Activated B cell treated with CpG ODN at 0.5 μM for 24 hours (primary cell): ENCODE measurements at regions of chr1 and their contacts with region 1.

Region 1: GRCh38 chr1:235954306-235955283 is 87.9 kb upstream of the LYST start:
- DNase-seq: peak; percentile 70
- ATAC-seq: peak; percentile 95
- H3K4me3 Mint-ChIP-seq: peak overlapping the region; percentile 58
- H3K27ac Mint-ChIP-seq: peak overlapping the region; percentile 81
- H3K4me1 Mint-ChIP-seq: peaks cover 69% of the 10 kb centered on the region
- H3K27me3 Mint-ChIP-seq: no peaks in the 10 kb centered on the region
- CTCF ChIP-seq: no peak

Region 2: DNA sequence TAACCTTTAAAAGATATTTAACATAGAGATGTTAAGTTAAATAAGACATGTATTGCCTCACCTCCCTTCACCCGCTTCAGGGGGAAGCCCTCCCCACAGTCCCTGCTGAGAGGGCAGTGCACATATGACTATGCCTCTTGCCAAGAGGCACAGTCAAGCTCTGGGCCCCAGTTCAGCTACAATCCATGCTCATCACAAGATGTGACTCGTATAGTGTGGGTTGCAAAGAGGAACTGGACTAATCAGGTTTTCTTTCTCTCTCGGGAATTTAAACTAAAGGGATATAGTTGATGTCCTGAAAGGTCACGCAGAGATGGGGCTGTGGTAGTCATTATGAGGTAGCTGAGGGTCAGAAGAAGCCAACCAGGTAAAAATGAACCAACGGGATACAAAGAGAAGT is 123.4 kb before region 1 on chr1:
- CTCF ChIA-PET with region 1: no interaction called
- POLR2A ChIA-PET with region 1: interaction called, 3 read pairs
- intact Hi-C with region 1: loop called (anchors 1 kb)
- DNase-seq: no peak
- ATAC-seq: peak; percentile 100
- H3K4me3 Mint-ChIP-seq: peak overlapping the region; percentile 13
- H3K27ac Mint-ChIP-seq: peak overlapping the region; percentile 84
- H3K4me1 Mint-ChIP-seq: peaks cover 20% of the 10 kb centered on the region
- H3K27me3 Mint-ChIP-seq: no peaks in the 10 kb centered on the region
- CTCF ChIP-seq: no peak

Region 3: GRCh38 chr1:235892734-235893413 is 61.7 kb before region 1 on chr1:
- CTCF ChIA-PET with region 1: no interaction called
- POLR2A ChIA-PET with region 1: interaction called, 7 read pairs
- intact Hi-C with region 1: loop called (anchors 2 kb)
- DNase-seq: no peak
- ATAC-seq: peak; percentile 69
- H3K4me3 Mint-ChIP-seq: no peak overlapping the region
- H3K27ac Mint-ChIP-seq: no peak overlapping the region
- H3K4me1 Mint-ChIP-seq: peaks cover 34% of the 10 kb centered on the region
- H3K27me3 Mint-ChIP-seq: no peaks in the 10 kb centered on the region
- CTCF ChIP-seq: no peak

Region 4: GRCh38 chr1:235933017-235933765 is 21.4 kb before region 1 on chr1:
- CTCF ChIA-PET with region 1: interaction called, 13 read pairs
- POLR2A ChIA-PET with region 1: interaction called, 29 read pairs
- intact Hi-C with region 1: loop called (anchors 1 kb)
- DNase-seq: no peak
- ATAC-seq: no peak
- H3K4me3 Mint-ChIP-seq: peak overlapping the region; percentile 62
- H3K27ac Mint-ChIP-seq: peak overlapping the region; percentile 72
- H3K4me1 Mint-ChIP-seq: peaks cover 91% of the 10 kb centered on the region
- H3K27me3 Mint-ChIP-seq: no peaks in the 10 kb centered on the region
- CTCF ChIP-seq: no peak

Region 5: DNA sequence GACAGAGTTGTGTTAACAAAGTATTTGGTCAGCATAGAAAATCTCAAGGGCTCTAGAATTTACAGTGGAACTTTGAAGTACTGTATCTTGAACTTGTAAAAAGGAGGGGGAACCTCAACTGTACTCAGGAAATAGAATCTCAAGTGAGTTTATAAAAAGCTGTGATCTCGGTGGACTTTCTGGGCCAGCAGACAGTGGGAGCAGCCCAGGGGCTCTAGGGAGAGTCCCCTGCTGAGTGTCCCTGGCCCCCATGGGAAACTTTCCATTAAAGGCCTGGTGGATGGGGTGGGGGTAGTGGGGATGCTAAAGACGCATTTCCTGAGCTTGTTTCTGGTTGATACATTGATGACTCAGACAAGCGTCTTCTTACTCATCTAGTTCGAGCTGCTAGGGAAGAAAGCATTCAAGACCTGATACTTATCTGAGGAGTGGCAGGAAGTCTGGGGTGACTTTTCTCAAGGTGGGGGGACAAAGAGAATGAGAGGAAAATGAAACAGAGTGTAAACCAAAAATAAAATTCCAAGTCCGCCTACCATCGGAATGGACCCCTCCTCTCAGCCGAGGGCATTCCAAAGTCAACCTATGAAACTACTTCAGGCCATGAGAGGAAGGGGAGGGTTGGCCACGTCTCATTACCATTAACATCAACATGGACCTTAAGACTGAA is 44.8 kb after region 1 on chr1:
- CTCF ChIA-PET with region 1: no interaction called
- POLR2A ChIA-PET with region 1: interaction called, 7 read pairs
- intact Hi-C with region 1: loop called (anchors 1 kb)
- DNase-seq: no peak
- ATAC-seq: peak; percentile 89
- H3K4me3 Mint-ChIP-seq: peak overlapping the region; percentile 58
- H3K27ac Mint-ChIP-seq: peak overlapping the region; percentile 89
- H3K4me1 Mint-ChIP-seq: peaks cover 15% of the 10 kb centered on the region
- H3K27me3 Mint-ChIP-seq: peaks cover 3% of the 10 kb centered on the region
- CTCF ChIP-seq: no peak

Region 6: GRCh38 chr1:236064674-236065508 is 110.3 kb after region 1 on chr1 and contains the start of gene NID1:
- CTCF ChIA-PET with region 1: no interaction called
- POLR2A ChIA-PET with region 1: no interaction called
- intact Hi-C with region 1: no loop called
- DNase-seq: peak; percentile 38
- ATAC-seq: peak; percentile 18
- H3K4me3 Mint-ChIP-seq: peak within 1 kb of the TSS; percentile 70
- H3K27ac Mint-ChIP-seq: no peak within 1 kb of the TSS
- H3K4me1 Mint-ChIP-seq: peaks cover 33% of the 10 kb centered on the region
- H3K27me3 Mint-ChIP-seq: peaks cover 25% of the 10 kb centered on the region
- CTCF ChIP-seq: no peak
- total RNA-seq, gene NID1: 0.04 and 0.10 TPM in 2 replicates